B cell (primary cell): ENCODE measurements at regions of chr19 and their contacts with region 1.

Region 1: DNA sequence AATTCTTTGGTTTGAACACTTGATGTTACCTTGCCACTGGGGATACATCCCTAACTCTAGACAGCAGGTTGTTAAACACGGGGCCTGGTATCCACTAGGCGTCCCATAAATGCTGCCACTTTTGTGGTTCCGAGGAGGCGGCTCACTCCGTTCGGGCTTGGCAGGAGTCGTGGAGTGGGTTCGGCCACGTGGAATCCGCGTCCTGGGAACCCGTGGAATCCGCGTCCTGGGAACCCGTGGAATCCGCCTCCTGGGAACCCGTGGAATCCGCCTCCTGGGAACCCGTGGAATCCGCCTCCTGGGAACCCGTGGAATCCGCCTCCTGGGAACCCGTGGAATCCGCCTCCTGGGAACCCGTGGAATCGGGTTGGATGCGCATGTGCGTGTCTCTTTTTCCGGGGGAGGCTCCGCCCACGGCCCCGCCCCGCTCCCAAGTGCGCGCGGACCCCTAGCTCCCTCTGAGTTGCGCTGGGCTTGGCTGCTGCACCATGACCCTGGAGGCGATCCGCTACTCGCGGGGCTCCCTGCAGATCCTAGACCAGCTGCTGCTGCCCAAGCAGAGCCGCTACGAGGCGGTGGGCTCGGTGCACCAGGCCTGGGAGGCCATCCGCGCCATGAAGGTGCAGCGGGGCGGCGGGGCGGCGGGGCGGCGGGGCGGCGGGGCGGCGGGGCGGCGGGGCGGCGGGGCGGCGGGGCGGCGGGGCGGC is at the start of gene MRI1:
- DNase-seq: peak; percentile 71
- ATAC-seq: peak; percentile 91
- H3K4me3 ChIP-seq: peak within 1 kb of the TSS; percentile 47 to 85 (median 60)
- H3K4me3 Mint-ChIP-seq: peak within 1 kb of the TSS; percentile 89
- H3K27ac ChIP-seq: peak within 1 kb of the TSS; percentile 43 to 66
- H3K27ac Mint-ChIP-seq: peak within 1 kb of the TSS; percentile 76
- H3K4me1 ChIP-seq: peaks cover 11 to 19% of the 10 kb centered on the region in 2 donors
- H3K4me1 Mint-ChIP-seq: peaks cover 18% of the 10 kb centered on the region
- H3K27me3 ChIP-seq: peaks cover 0 to 6% (median 0%) of the 10 kb centered on the region in 4 experiments
- H3K27me3 Mint-ChIP-seq: no peaks in the 10 kb centered on the region
- CTCF ChIP-seq: no peak
- total RNA-seq, gene MRI1: 65.0 and 75.5 TPM in 2 replicates

Region 2: DNA sequence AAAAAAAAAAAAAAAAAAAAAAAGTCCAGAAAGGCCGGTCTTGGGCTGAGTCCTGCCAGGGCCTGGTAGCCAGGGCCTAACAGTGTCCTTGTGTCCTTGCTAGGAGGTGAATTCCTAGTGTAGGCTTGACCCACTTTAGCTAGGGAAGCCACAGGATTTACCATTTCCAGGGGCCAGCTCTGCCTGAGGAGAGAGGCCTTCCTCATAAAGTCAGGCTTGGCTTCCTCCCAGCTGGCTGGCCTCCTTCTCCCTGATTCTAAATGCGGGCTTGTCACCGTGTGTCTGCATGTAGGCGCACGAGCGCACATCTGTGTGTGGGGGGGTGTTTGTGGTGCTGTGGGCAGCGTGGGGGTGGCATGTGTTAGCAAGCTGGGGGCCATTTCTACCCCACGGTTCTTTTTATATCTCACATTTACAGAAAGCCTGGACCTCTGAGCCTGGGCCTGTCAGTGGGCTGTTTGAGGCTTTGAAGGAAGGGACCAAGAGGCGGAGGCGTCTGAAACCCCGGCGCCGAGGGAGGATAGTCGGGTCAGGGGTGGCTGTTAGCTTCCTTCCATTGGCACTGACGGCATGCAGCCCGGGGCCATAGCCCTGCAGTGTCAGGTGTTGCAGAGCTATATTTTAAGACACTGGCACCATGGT is 582.4 kb before region 1 on chr19:
- CTCF ChIA-PET with region 1: no interaction called
- POLR2A ChIA-PET with region 1: interaction called, 14 read pairs
- intact Hi-C with region 1: no loop called
- DNase-seq: peak; percentile 49
- ATAC-seq: peak; percentile 58
- H3K4me3 ChIP-seq: no peak overlapping the region
- H3K4me3 Mint-ChIP-seq: peak overlapping the region; percentile 62
- H3K27ac ChIP-seq: no peak overlapping the region
- H3K27ac Mint-ChIP-seq: peak overlapping the region; percentile 84
- H3K4me1 ChIP-seq: peaks cover 27 to 37% of the 10 kb centered on the region in 2 donors
- H3K4me1 Mint-ChIP-seq: peaks cover 29% of the 10 kb centered on the region
- H3K27me3 ChIP-seq: no peaks in the 10 kb centered on the region
- H3K27me3 Mint-ChIP-seq: no peaks in the 10 kb centered on the region
- CTCF ChIP-seq: no peak

Region 3: DNA sequence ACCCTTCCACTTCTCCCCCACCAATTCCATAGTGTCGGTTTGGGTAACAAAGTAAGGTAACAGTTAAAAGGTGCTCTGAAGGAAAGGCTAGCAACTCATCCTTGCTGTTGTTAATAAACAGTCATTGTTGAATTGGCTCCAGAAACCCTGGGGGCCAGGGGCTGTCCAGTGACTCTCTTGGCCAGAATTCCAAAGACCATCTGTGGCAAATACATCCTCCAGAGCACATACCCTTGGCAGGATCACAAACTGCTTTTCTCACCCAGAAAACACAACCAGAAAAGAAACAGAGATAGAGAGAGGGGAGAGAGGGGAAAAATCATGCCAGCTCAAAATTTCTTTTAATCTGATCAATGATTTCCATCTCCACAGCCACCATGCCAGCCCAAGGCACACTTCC is 280.1 kb before region 1 on chr19:
- CTCF ChIA-PET with region 1: no interaction called
- POLR2A ChIA-PET with region 1: no interaction called
- intact Hi-C with region 1: no loop called
- DNase-seq: no peak
- ATAC-seq: no peak
- H3K4me3 ChIP-seq: no peak overlapping the region
- H3K4me3 Mint-ChIP-seq: no peak overlapping the region
- H3K27ac ChIP-seq: no peak overlapping the region
- H3K27ac Mint-ChIP-seq: no peak overlapping the region
- H3K4me1 ChIP-seq: no peaks in the 10 kb centered on the region
- H3K4me1 Mint-ChIP-seq: no peaks in the 10 kb centered on the region
- H3K27me3 ChIP-seq: peaks cover 0 to 6% (median 0%) of the 10 kb centered on the region in 4 experiments
- H3K27me3 Mint-ChIP-seq: peaks cover 35% of the 10 kb centered on the region
- CTCF ChIP-seq: no peak

Region 4: DNA sequence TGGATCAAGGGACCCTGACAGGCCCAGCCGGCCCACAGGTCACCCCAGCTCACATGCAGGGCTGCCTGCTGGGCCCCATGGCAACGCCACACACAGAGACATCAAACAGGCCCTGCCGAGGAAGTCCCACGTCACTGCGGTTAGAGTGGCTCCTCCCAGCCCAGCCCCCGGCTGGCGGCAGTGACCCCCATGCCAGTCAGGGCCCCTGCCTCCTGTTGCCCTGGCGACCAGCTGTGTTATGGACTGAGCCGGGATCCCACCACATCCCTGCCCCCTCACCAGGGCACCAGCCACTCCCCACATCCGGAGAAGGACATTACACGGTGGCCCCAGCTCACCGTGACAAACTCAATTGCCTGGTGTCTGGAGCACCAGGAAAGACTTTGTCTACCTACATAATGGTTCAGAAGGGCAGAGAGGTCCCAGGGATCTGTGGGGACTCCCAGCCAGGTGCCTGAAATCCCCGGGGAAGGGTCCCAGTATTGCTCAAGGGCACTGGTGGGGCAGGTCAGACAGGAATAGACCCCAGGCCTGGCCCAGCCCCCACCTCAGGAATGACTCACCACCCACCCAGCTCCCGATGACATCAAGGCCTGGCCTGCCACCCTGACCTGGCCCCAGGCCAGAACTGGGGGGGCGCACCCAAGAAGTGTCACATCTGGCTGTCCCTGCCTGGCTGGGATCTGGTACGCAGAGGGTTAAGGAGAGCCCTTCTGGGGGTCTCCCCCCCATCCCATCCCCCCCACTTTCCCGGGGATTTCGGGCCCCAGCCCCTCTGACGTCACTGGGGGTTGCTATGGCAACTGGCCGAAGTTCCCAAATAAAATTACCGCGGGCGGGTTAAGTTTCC is 82.5 kb after region 1 on chr19:
- CTCF ChIA-PET with region 1: no interaction called
- POLR2A ChIA-PET with region 1: no interaction called
- intact Hi-C with region 1: no loop called
- DNase-seq: peak; percentile 98
- ATAC-seq: peak; percentile 58
- H3K4me3 ChIP-seq: peak overlapping the region in 4 of 5 experiments; percentile 48 to 72 (median 50)
- H3K4me3 Mint-ChIP-seq: peak overlapping the region; percentile 89
- H3K27ac ChIP-seq: peak overlapping the region; percentile 91 to 98
- H3K27ac Mint-ChIP-seq: peak overlapping the region; percentile 99
- H3K4me1 ChIP-seq: peaks cover 51 to 63% of the 10 kb centered on the region in 2 donors
- H3K4me1 Mint-ChIP-seq: peaks cover 57% of the 10 kb centered on the region
- H3K27me3 ChIP-seq: peaks cover 0 to 22% (median 0%) of the 10 kb centered on the region in 4 experiments
- H3K27me3 Mint-ChIP-seq: no peaks in the 10 kb centered on the region
- CTCF ChIP-seq: no peak